ENCODE measurements at regions of chr4 and their contacts with region 1.

Region 1: DNA sequence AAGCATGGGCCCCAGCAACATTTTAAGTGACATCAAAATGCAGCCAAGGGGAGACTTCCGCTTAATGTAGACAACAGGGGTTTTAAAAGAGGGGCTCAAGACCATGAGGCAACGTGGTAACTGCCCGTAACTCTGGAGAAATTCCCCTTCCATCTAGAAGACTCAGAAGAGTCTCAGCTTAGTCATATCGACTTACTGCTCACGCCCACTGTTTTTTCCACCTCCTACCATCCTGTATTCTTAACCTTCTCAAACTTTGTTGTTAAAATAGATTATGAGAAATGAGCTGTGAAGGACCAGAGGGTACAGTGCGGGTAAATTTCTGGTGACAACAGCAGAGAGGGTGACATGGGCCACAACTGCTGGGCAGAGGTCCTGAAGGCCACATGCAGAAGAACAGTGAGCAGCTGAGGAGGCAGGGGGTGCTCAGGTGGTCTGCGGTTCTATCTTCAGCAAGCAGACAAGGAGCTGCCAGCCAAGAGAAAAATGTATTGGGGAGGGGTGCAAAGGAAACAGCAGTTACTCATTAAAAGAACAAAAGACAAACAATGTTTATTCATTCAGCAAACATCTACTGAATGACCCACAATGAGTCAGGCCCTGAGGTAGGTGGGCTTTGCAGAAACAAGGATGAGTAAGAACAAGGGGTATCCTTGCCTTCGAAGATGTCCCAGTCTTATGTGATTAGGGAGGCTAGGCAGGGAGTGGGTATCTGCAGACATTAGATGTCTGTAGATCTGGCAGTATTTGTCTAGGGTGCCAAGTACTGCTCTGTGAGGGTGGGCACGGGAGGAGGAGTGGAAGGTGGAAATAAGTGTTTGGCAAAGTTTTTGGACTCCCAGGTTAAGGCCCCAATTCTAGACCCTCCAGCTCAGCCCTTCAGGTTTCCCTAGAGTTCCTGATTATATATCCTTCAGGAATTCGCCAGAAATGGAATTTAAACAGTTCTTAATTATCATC is 175.3 kb downstream of the TSPAN5 start:
- DNase-seq: peak; percentile 80
- ATAC-seq: peak; percentile 87
- H3K4me3 Mint-ChIP-seq: peak overlapping the region; percentile 51
- H3K27ac Mint-ChIP-seq: peak overlapping the region; percentile 98
- H3K4me1 Mint-ChIP-seq: peaks cover 76% of the 10 kb centered on the region
- H3K27me3 Mint-ChIP-seq: no peaks in the 10 kb centered on the region
- CTCF ChIP-seq: no peak

Region 2: DNA sequence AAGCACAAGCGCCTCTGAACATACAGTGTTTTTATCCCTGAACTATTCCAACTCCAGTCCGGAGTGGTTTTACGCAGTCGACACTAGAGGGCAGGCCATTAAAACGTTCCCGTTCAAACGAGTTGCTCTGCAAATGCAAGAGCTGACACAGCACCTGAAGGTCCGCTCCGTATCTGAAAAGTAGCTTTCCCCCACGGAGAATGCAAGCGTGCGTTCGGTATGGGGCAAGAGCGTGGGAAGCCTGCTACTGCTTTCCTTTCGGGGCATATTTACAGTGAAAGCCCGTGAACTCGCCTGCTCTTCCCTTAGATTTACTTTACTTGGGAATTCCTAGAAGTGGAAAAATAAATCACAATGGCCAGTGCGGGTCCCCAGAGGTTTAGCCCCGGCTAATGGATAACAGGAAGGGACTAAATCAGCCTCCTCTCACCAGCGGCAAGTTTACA is 15.5 kb before region 1 on chr4:
- CTCF ChIA-PET with region 1: interaction called, 23 read pairs
- POLR2A ChIA-PET with region 1: interaction called, 5 read pairs
- intact Hi-C with region 1: no loop called
- DNase-seq: peak; percentile 83
- ATAC-seq: peak; percentile 95
- H3K4me3 Mint-ChIP-seq: peak overlapping the region; percentile 66
- H3K27ac Mint-ChIP-seq: no peak overlapping the region
- H3K4me1 Mint-ChIP-seq: peaks cover 27% of the 10 kb centered on the region
- H3K27me3 Mint-ChIP-seq: no peaks in the 10 kb centered on the region
- CTCF ChIP-seq: peak; percentile 65

Region 3: DNA sequence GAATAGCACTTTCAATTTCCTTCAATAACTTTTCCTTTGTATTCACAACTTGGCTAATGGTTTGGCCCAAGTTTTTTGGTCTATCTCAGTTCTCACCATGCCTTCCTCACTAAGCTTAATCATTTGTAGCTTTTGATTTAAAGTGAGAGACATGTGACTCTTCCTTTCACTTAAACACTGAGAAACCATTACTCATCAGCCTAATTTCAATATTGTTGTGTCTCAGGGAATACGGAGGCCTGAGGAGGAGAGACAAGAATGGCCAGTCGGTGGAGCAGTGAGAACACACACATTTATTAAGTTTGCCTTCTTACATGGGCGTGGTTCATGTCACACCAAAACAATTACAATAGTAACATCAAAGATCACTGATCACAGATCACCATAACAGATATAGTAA is 118.6 kb after region 1 on chr4:
- CTCF ChIA-PET with region 1: interaction called, 5 read pairs
- POLR2A ChIA-PET with region 1: interaction called, 3 read pairs
- intact Hi-C with region 1: loop called (anchors 10 kb)
- DNase-seq: peak; percentile 55
- ATAC-seq: peak; percentile 88
- H3K4me3 Mint-ChIP-seq: peak overlapping the region; percentile 34
- H3K27ac Mint-ChIP-seq: peak overlapping the region; percentile 86
- H3K4me1 Mint-ChIP-seq: peaks cover 42% of the 10 kb centered on the region
- H3K27me3 Mint-ChIP-seq: no peaks in the 10 kb centered on the region
- CTCF ChIP-seq: no peak

Region 4: GRCh38 chr4:98928505-98929340 is 445.6 kb after region 1 on chr4 and contains the start of gene EIF4E:
- CTCF ChIA-PET with region 1: interaction called, 4 read pairs
- POLR2A ChIA-PET with region 1: interaction called, 9 read pairs
- intact Hi-C with region 1: loop called (anchors 10 kb)
- DNase-seq: peak; percentile 98
- ATAC-seq: peak; percentile 78
- H3K4me3 Mint-ChIP-seq: peak within 1 kb of the TSS; percentile 88
- H3K27ac Mint-ChIP-seq: peak within 1 kb of the TSS; percentile 95
- H3K4me1 Mint-ChIP-seq: peaks cover 36% of the 10 kb centered on the region
- H3K27me3 Mint-ChIP-seq: no peaks in the 10 kb centered on the region
- CTCF ChIP-seq: peak; percentile 48
- total RNA-seq, gene EIF4E: 118 to 121 TPM

Measured in activated CD8-positive, alpha-beta T cell treated with anti-CD3 and anti-CD28 coated beads for 36 hours (primary cell).